Vagina (tissue), 2 donors: ENCODE measurements at regions of chr3 and their contacts with region 1.

Region 1: GRCh38 chr3:51670823-51671733 is at the start of gene TEX264:
- DNase-seq: no peak
- H3K4me3 ChIP-seq: peak within 1 kb of the TSS; percentile 65 to 91
- H3K27ac ChIP-seq: peak within 1 kb of the TSS; percentile 85
- H3K4me1 ChIP-seq: peaks cover 63% of the 10 kb centered on the region
- H3K27me3 ChIP-seq: no peaks in the 10 kb centered on the region
- CTCF ChIP-seq: no peak
- POLR2A ChIP-seq: peak in 1 of 2 donors; percentile 85
- total RNA-seq, gene TEX264: 66.8 TPM

Region 2: DNA sequence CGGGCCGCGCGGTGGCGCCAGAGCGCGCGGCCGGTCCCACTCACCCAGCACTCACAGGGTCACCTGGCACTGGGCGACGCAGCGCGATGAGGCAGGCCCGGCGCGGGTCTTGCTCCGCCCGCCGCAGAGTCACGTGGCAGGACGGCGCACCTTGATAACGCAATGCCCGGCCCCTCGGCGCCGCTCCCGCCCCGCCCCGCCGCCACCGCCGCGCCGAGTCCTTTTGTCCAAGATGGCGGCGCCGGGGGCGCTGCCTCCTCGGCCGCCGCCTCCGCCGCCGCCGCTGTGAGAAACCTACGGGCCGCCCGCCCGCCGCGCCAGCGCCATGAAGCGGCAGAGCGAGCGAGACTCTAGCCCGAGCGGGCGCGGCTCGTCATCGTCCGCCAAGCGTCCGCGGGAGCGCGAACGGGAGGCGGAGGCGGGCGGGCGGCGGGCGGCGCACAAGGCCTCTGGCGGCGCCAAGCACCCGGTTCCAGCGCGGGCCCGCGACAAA is 280.0 kb before region 1 on chr3 and contains the start of gene RBM15B:
- intact Hi-C with region 1: loop called (anchors 10 kb)
- DNase-seq: peak; percentile 95 to 98
- H3K4me3 ChIP-seq: peak within 1 kb of the TSS; percentile 54 to 99
- H3K27ac ChIP-seq: peak within 1 kb of the TSS; percentile 75
- H3K4me1 ChIP-seq: peaks cover 90% of the 10 kb centered on the region
- H3K27me3 ChIP-seq: no peaks in the 10 kb centered on the region
- CTCF ChIP-seq: peak in 2 of 3 experiments; percentile 84 to 87
- POLR2A ChIP-seq: peak in 1 of 2 donors; percentile 34
- total RNA-seq, gene RBM15B: 20.6 TPM

Region 3: DNA sequence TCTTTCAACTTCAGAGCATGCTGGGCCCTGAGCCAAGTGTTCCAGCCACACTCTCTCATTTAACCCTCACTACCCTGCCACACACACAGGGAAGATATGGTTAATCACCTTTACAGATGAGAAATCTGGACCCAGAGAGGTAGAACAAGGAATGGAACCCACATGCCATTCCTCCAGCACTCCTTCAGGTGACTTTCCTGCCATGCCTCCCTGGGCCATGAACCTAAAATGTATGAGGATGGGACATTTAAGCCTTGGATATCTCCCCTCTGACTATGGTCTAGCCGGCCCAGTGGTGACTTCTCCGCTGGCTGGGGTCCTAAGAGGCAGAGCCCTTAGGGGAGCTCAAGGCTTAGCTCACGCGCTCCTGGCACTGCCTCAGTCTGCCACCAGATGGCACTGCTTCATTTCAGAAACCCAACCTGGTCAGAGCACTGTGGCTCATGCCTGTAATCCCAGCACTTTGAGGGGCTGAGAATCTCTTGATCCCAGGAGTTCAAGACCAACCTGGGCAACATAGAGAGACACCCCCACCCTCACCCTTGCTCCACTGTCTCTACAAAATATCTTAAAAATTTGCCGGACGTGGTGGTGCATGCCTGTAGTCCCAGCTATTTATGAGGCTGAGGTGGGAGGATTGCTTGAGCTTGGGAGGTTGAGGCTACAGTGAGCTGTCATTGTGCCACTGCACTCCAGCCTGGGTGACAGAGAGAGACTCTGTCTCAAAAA is 169.1 kb before region 1 on chr3:
- intact Hi-C with region 1: loop called (anchors 5 kb)
- DNase-seq: no peak
- H3K4me3 ChIP-seq: no peak overlapping the region
- H3K27ac ChIP-seq: no peak overlapping the region
- H3K4me1 ChIP-seq: peaks cover 8% of the 10 kb centered on the region
- H3K27me3 ChIP-seq: no peaks in the 10 kb centered on the region
- CTCF ChIP-seq: peak; percentile 93 to 94 (median 94)
- POLR2A ChIP-seq: no peak